Transverse colon (tissue), 4 donors: ENCODE measurements at regions of chr17 and their contacts with region 1.

Region 1: GRCh38 chr17:19883537-19884215 is 15.9 kb upstream of the ULK2 start:
- DNase-seq: no peak
- H3K4me3 ChIP-seq: no peak overlapping the region
- H3K27ac ChIP-seq: no peak overlapping the region
- H3K4me1 ChIP-seq: no peaks in the 10 kb centered on the region
- H3K27me3 ChIP-seq: no peaks in the 10 kb centered on the region
- CTCF ChIP-seq: no peak
- EP300 ChIP-seq: no peak
- POLR2A ChIP-seq: no peak

Region 2: GRCh38 chr17:19915245-19915978 is 31.7 kb after region 1 on chr17:
- in situ Hi-C with region 1: no loop called
- intact Hi-C with region 1: loop called (anchors 1 kb)
- DNase-seq: no peak
- H3K4me3 ChIP-seq: no peak overlapping the region
- H3K27ac ChIP-seq: no peak overlapping the region
- H3K4me1 ChIP-seq: no peaks in the 10 kb centered on the region
- H3K27me3 ChIP-seq: no peaks in the 10 kb centered on the region
- CTCF ChIP-seq: no peak
- EP300 ChIP-seq: no peak
- POLR2A ChIP-seq: no peak